Activated B cell treated with CpG ODN at 0.5 μM for 24 hours (primary cell): ENCODE measurements at regions of chr1 and their contacts with region 1.

Region 1: DNA sequence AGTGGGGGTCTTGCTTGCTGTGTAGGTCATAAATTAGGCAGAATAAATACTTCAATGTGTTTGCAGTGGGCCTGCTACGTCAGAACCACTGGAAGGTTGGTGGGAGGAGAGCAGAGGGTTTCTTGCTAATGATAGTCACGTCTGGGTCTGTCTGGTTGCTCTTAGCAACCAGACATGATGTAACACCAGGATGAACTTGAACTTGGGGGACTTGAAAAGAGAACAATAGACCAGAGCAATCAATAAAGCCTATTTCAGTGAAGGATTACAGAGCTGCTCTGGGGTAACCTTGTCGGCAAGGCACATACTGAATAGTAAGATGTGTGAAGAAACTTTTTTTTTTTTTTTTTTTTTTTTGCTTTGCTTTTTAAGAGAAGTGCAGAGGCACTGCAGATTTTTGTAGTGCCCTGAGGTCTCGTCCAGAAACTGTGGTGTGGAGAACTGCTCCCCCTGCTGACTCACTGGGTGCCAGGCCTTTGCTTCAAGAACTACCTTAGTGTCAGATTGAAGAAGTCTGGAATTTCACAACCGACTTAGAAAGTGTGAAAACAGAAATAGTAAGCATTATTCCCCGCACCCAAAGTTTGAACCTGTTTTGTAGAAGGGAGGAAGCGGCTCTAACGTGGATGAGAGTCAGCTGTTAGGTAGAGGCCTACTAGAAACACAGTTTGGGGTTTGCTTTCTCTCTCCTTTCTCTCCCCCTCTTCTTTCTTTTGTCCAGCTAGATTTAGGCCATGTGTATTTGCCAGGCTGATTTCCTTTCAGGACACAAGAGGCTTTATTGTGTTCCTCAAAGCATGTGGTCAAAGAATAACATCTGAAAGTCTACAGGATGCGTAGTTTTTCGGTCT is 271.6 kb downstream of the TM2D1 start:
- DNase-seq: peak; percentile 17
- ATAC-seq: peak; percentile 68
- H3K4me3 Mint-ChIP-seq: no peak overlapping the region
- H3K27ac Mint-ChIP-seq: no peak overlapping the region
- H3K4me1 Mint-ChIP-seq: peaks cover 4% of the 10 kb centered on the region
- H3K27me3 Mint-ChIP-seq: peaks cover 2% of the 10 kb centered on the region
- CTCF ChIP-seq: peak; percentile 16

Region 2: DNA sequence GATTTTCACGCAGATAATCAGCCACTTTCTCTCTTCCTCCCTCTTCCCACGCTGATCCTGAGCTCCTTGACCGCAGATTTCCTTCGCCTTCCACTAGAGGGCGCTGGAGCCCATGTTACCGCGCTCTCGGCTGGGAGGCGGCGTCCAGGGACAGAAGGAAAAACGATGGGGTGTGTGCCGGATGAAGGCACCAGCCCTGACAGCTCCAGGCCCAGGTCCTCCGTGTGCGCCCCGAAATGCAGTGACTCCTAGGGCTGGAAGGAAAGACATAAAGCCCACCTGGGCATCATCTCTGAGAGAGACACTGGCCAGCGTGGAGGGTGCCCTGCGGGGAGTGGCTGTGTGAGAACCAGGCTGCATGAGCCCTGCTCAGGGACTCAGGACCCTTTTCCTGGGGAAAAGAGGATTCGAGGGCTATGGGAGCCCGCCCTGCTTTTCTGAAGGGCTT is 1481.8 kb before region 1 on chr1:
- CTCF ChIA-PET with region 1: interaction called, 5 read pairs
- POLR2A ChIA-PET with region 1: no interaction called
- intact Hi-C with region 1: loop called (anchors 1 kb)
- DNase-seq: no peak
- ATAC-seq: no peak
- H3K4me3 Mint-ChIP-seq: no peak overlapping the region
- H3K27ac Mint-ChIP-seq: no peak overlapping the region
- H3K4me1 Mint-ChIP-seq: peaks cover 2% of the 10 kb centered on the region
- H3K27me3 Mint-ChIP-seq: peaks cover 17% of the 10 kb centered on the region
- CTCF ChIP-seq: no peak

Region 3: DNA sequence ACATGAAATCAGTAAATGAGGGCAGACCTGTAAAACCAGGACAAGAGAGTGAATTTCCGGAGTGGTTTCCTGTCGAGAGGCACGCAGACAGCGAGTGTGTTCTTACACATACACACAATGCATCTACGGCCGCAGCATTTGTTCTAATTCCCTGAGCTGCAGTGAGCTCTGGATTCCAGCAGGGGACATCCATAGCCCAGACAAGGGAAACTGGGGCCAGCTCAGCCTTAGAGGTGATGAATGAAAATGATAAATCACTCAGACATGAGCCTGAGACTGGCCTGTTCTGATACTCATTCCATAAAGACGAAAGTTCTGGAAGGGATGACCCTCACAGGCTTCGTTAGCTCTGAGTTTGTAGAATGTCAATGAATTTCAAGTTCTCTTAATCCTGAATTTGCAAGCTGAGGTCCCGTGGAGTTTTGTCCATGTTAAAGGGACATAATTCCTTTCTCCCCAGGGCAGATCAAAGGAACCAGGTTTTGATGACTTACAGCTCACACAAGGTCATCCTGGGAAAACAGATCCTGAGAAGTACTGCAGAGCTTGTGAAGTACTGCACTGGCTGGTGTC is 1171.9 kb before region 1 on chr1:
- CTCF ChIA-PET with region 1: no interaction called
- POLR2A ChIA-PET with region 1: no interaction called
- intact Hi-C with region 1: loop called (anchors 5 kb)
- DNase-seq: no peak
- ATAC-seq: no peak
- H3K4me3 Mint-ChIP-seq: no peak overlapping the region
- H3K27ac Mint-ChIP-seq: no peak overlapping the region
- H3K4me1 Mint-ChIP-seq: no peaks in the 10 kb centered on the region
- H3K27me3 Mint-ChIP-seq: no peaks in the 10 kb centered on the region
- CTCF ChIP-seq: no peak

Region 4: DNA sequence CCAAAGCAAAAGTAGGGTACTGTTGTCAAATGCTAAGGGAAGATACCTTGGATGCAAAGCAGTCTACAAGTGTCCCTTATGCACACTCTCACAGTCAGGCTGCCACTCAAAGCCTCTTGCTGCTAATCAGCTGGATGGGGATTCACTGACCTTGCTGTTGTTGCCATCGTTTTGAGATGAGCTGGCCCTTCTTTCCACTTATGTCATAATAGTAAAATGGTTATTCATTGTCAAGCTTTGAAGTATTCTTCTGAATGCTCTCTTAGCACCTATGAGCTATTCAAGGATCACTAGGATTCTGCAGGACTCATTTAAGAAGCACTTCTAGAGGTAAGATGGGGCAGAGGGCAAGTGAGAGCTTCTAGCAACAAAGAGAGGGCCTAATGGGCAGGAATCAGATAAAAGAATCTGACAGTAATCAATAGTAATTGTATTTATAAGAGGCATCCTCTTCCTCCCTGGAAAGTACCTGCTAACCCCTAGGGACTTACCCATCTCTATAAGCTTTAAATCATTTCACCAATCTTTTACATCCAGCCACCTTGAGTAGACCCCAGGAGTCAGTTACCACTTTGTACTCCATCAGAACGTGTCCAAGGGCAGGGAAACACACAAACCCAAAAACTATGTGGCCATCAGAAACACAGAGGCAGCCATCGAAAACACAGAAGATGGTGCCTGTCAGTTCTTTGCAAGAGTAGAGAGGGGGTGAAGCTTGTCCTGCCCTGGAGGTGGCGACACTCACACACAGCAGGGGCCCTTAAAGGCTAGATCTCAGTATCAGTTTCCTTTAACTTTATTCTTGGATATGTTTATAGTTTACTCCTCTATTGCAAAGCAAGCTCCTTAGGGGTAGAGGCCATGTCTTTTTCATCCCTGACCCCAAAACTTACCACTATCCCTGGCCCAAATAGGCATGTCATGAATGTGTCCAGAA is 474.6 kb before region 1 on chr1:
- CTCF ChIA-PET with region 1: interaction called, 4 read pairs
- POLR2A ChIA-PET with region 1: no interaction called
- intact Hi-C with region 1: loop called (anchors 2 kb)
- DNase-seq: no peak
- ATAC-seq: no peak
- H3K4me3 Mint-ChIP-seq: no peak overlapping the region
- H3K27ac Mint-ChIP-seq: no peak overlapping the region
- H3K4me1 Mint-ChIP-seq: peaks cover 7% of the 10 kb centered on the region
- H3K27me3 Mint-ChIP-seq: peaks cover 1% of the 10 kb centered on the region
- CTCF ChIP-seq: no peak

Region 5: GRCh38 chr1:61420909-61421835 is 32.2 kb before region 1 on chr1:
- CTCF ChIA-PET with region 1: no interaction called
- POLR2A ChIA-PET with region 1: no interaction called
- intact Hi-C with region 1: no loop called
- DNase-seq: no peak
- ATAC-seq: no peak
- H3K4me3 Mint-ChIP-seq: no peak overlapping the region
- H3K27ac Mint-ChIP-seq: no peak overlapping the region
- H3K4me1 Mint-ChIP-seq: peaks cover 5% of the 10 kb centered on the region
- H3K27me3 Mint-ChIP-seq: no peaks in the 10 kb centered on the region
- CTCF ChIP-seq: no peak

Region 6: GRCh38 chr1:61851849-61852669 is 398.7 kb after region 1 on chr1:
- CTCF ChIA-PET with region 1: no interaction called
- POLR2A ChIA-PET with region 1: no interaction called
- intact Hi-C with region 1: loop called (anchors 5 kb)
- DNase-seq: no peak
- ATAC-seq: no peak
- H3K4me3 Mint-ChIP-seq: no peak overlapping the region
- H3K27ac Mint-ChIP-seq: no peak overlapping the region
- H3K4me1 Mint-ChIP-seq: no peaks in the 10 kb centered on the region
- H3K27me3 Mint-ChIP-seq: no peaks in the 10 kb centered on the region
- CTCF ChIP-seq: peak; percentile 75